Activated naive CD4-positive, alpha-beta T cell treated with anti-CD3 and anti-CD28 coated beads, Interleukin-2, amount 10 ng/mL, durations not matched to agents 7 days and 5 days (primary cell): ENCODE measurements at regions of chr10 and their contacts with region 1.

Region 1: DNA sequence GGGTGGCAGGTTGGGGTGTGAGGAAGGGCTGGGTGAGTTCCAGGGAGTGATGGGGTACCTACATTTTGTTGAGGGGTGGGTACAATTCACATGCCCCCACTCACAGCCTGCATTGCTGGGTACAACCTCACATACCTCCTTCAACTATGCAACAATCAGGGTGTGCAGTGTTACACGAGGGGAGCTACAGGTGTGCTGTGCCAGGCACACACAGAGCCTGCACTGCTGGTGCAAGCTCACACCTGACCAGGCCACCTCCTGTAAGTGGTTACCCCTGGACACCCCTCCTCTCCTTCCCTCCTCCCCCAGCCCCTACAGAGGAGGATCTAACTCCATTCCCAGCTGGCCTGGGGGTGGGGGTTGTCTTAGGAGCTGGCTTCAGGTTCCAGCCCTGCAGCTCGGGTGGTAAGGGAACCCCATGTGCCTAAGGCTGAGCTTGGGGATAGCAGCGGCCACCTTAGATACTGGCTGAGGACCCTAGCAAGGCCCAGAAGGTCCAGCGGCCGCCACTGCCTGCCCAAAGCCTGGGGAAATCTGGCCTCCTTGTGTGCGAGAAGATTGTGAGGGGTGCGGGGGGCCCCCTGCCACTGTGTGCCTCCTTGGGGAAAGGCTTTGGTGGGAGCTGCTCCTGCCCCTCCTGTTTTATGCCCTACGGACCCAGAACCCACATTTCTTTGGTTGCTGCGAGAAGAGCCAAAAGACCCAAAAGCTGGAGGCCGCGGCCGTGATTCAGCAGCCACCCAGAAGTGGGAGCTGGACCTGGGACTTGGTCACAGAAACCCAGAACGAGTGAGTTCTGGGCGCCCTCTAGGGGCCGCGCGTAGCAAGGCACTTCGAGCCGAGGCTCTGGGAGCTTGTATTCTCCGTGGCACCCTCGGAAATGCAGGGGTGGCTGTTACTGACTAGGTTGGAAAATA is 10.8 kb downstream of the TLX1 start:
- DNase-seq: peak; percentile 86
- H3K4me3 Mint-ChIP-seq: no peak overlapping the region
- H3K27ac Mint-ChIP-seq: no peak overlapping the region
- H3K4me1 Mint-ChIP-seq: peaks cover 3% of the 10 kb centered on the region
- H3K27me3 Mint-ChIP-seq: peaks cover 100% of the 10 kb centered on the region

Region 2: GRCh38 chr10:101050208-101051069 is 91.4 kb before region 1 on chr10:
- CTCF ChIA-PET with region 1: interaction called, 47 read pairs
- DNase-seq: peak; percentile 86
- H3K4me3 Mint-ChIP-seq: no peak overlapping the region
- H3K27ac Mint-ChIP-seq: no peak overlapping the region
- H3K4me1 Mint-ChIP-seq: peaks cover 33% of the 10 kb centered on the region
- H3K27me3 Mint-ChIP-seq: peaks cover 56% of the 10 kb centered on the region

Region 3: DNA sequence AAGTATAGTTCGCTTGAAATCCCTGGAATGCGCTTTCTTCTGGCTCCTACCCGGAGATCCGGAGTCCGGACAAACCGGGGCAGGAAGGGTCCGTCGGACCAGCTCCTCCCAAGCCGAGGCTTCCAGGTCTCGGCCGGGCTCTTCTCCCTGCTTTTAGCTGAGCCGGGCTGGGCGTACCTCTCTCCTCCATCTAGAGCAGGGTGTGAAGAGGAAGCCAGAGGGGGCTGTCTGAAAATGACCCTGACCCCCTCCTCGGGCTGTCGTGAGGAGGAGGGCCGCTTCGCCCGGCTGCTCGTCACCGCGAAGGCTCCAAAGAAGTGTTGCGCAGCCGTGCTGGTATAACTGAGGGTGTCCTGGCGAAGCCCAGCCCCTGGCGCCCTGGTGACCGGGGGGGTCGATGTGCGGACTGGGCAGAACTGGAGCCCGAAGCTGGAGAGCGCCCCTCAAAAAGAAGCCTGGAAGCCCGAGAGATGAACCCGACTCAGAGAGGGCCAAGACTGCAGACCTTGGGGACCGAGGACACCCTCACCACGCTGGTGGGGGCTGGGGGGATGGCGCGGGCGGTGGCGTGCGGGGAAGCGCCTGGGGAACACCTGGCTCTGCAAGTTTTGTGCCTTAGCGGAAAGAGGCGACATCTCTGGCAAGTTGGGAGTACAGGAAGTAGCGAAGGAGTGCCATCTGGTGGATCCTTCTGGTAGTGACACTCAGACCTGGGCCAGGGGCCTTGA is 74.4 kb before region 1 on chr10:
- CTCF ChIA-PET with region 1: interaction called, 17 read pairs
- DNase-seq: peak; percentile 87
- H3K4me3 Mint-ChIP-seq: peak overlapping the region; percentile 67
- H3K27ac Mint-ChIP-seq: no peak overlapping the region
- H3K4me1 Mint-ChIP-seq: peaks cover 30% of the 10 kb centered on the region
- H3K27me3 Mint-ChIP-seq: peaks cover 78% of the 10 kb centered on the region

Region 4: DNA sequence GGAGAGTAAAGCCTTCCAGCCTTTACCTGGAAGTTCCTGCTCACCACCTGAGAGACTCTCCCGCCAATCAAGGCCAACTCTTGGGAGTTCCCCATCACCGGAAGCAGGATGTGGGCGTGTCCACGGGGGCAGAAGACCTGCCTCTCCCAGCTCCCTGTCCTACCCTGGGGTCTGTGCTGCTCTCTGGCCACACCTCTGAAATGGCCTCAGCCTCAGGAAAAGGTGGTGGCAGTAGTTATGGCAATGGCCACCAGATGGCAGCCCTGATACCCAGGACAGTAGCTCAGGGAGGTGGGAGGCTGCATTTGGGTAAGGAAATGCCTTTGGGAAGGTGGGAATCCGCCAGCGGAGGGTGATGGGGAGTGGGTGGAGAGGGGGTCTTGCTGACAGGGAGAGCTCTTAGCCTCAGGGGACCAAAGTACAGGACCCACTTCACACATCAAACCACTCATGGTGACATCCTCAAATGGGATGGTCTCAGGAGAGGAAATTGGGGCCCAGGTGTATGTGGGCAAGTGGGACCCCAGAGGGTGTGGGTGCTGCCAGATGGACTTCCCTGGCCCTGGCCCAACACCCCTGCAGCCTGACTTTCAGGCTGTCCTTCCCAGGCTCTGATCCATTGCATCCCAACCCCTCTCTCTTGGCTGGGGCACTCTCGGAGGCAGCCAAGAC is 46.2 kb before region 1 on chr10:
- CTCF ChIA-PET with region 1: interaction called, 272 read pairs
- DNase-seq: peak; percentile 83
- H3K4me3 Mint-ChIP-seq: no peak overlapping the region
- H3K27ac Mint-ChIP-seq: peak overlapping the region; percentile 68
- H3K4me1 Mint-ChIP-seq: no peaks in the 10 kb centered on the region
- H3K27me3 Mint-ChIP-seq: peaks cover 82% of the 10 kb centered on the region

Region 5: GRCh38 chr10:101130984-101131961 is 10.6 kb before region 1 on chr10 and contains the start of gene TLX1:
- CTCF ChIA-PET with region 1: interaction called, 25 read pairs
- DNase-seq: no peak
- H3K4me3 Mint-ChIP-seq: no peak within 1 kb of the TSS
- H3K27ac Mint-ChIP-seq: peak within 1 kb of the TSS; percentile 55
- H3K4me1 Mint-ChIP-seq: peaks cover 23% of the 10 kb centered on the region
- H3K27me3 Mint-ChIP-seq: peaks cover 100% of the 10 kb centered on the region

Region 6: GRCh38 chr10:101161494-101162299 is 19.8 kb after region 1 on chr10:
- CTCF ChIA-PET with region 1: interaction called, 12 read pairs
- DNase-seq: peak; percentile 78
- H3K4me3 Mint-ChIP-seq: no peak overlapping the region
- H3K27ac Mint-ChIP-seq: peak overlapping the region; percentile 64
- H3K4me1 Mint-ChIP-seq: peaks cover 8% of the 10 kb centered on the region
- H3K27me3 Mint-ChIP-seq: peaks cover 72% of the 10 kb centered on the region

Region 7: GRCh38 chr10:101222683-101223273 is 80.9 kb after region 1 on chr10:
- CTCF ChIA-PET with region 1: interaction called, 12 read pairs
- DNase-seq: no peak
- H3K4me3 Mint-ChIP-seq: no peak overlapping the region
- H3K27ac Mint-ChIP-seq: no peak overlapping the region
- H3K4me1 Mint-ChIP-seq: peaks cover 32% of the 10 kb centered on the region
- H3K27me3 Mint-ChIP-seq: peaks cover 99% of the 10 kb centered on the region